ENCODE measurements at regions of chr19 and their contacts with region 1.

Region 1: DNA sequence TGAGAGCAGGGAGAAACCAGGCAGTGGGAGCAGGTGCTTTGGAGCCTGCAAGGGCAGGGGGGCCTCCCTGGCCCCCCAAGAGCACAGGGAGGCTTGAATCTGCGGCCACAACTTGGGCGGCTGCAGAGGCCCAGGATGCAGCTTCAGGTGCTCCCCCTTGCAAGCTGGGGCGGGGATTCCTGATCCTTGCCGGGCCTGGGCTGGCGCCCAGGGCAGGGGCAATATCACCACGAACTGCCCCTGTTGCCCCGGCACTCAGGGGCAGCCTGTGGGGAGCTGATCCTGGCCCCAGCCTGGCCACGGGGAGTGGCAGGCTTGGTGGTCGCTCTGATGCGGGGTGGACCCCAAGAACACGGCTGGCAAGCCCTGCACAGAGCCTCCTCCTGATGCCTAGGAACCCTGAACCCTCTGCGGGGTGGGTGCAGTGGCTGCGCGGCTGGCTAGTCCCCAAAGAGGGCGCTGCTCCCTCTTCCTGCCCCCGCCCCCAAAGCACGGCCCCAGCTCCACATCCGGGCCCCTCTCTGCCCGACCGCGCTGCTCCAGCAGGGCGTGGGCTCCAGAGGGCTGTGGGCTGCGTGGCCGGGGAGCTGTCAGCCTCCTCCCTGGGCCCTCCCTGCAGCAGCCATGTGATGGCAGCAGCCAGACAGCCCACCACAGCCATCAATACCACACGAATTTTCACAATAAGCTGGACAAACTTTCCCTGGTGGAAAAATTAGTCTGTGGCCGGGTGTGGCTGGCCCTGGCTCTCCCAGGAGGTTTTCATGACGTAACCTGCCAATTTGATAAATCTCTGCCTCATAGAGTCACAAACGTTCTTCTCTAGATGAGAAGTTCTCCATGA is 21.0 kb downstream of the TNFSF9 start:
- DNase-seq: peak; percentile 87
- ATAC-seq: peak; percentile 98
- H3K4me3 Mint-ChIP-seq: peak overlapping the region; percentile 28
- H3K27ac Mint-ChIP-seq: peak overlapping the region; percentile 52
- H3K4me1 Mint-ChIP-seq: peaks cover 28% of the 10 kb centered on the region
- H3K27me3 Mint-ChIP-seq: no peaks in the 10 kb centered on the region

Region 2: GRCh38 chr19:6535558-6536137 is 16.2 kb before region 1 on chr19:
- CTCF ChIA-PET with region 1: interaction called, 10 read pairs
- POLR2A ChIA-PET with region 1: no interaction called
- DNase-seq: no peak
- ATAC-seq: no peak
- H3K4me3 Mint-ChIP-seq: no peak overlapping the region
- H3K27ac Mint-ChIP-seq: peak overlapping the region; percentile 69
- H3K4me1 Mint-ChIP-seq: peaks cover 56% of the 10 kb centered on the region
- H3K27me3 Mint-ChIP-seq: peaks cover 12% of the 10 kb centered on the region

Region 3: DNA sequence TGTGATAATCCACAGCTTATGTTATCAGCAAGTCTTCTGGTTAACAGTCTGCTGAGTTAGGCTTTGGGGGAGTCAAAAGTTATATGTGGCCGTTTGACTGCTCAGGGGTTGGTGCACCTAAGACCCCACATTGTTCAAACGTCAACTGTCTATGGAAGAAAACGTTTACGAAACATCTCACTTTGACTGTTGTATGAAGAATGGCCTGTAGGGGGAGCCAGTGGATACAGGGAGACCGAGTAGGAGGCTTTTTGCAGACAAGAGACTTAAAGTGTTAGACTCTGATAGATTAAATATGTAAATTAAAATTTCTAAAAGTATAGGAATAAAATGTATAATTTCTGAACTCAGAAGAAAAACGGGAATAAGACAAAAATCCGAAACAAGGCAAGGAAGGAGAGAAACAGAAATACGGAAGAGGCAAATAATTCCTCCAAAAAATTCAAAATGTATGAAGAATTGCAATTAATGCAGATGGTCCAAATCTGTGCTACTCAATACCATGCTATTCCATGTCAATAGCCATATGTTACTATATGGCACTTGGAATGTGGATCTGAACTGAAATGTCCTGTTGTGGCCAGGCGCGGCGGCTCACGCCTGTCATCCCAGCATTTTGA is 80.3 kb after region 1 on chr19:
- CTCF ChIA-PET with region 1: interaction called, 14 read pairs
- POLR2A ChIA-PET with region 1: no interaction called
- DNase-seq: peak; percentile 93
- ATAC-seq: peak; percentile 82
- H3K4me3 Mint-ChIP-seq: no peak overlapping the region
- H3K27ac Mint-ChIP-seq: no peak overlapping the region
- H3K4me1 Mint-ChIP-seq: peaks cover 40% of the 10 kb centered on the region
- H3K27me3 Mint-ChIP-seq: peaks cover 4% of the 10 kb centered on the region

Measured in activated CD8-positive, alpha-beta T cell treated with anti-CD3 and anti-CD28 coated beads, Interleukin-2, amount 10 ng/mL, durations not matched to agents 7 days and 5 days (primary cell).